A673 (cell line): ENCODE measurements at regions of chr3 and their contacts with region 1.

Region 1: GRCh38 chr3:115783938-115784738 is 160.8 kb downstream of the GAP43 start:
- DNase-seq: peak; percentile 96
- H3K4me3 ChIP-seq: peak overlapping the region; percentile 74
- H3K27ac ChIP-seq: peak overlapping the region; percentile 73
- H3K4me1 ChIP-seq: peaks cover 3% of the 10 kb centered on the region
- H3K27me3 ChIP-seq: no peaks in the 10 kb centered on the region
- CTCF ChIP-seq: peak; percentile 99

Region 2: DNA sequence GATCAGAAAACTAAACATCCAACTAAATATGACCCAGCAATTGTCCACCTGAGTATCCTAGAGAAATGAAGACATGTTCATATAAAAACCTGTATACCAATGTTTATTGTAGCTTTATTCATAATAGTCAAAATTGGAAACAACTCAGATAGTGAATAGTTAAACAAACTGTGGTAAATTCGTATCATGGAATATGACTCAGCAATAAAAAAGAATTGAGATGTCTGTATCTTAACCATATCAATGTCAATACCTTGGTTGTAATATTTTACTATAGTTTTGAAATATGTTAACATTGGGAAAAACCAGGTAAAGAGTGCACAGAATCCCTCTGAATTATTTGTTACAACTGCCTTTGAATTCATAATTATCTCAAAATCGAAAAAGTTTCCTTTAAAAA is 320.1 kb before region 1 on chr3:
- CTCF ChIA-PET with region 1: no interaction called
- POLR2A ChIA-PET with region 1: no interaction called
- intact Hi-C with region 1: no loop called
- DNase-seq: no peak
- H3K4me3 ChIP-seq: no peak overlapping the region
- H3K27ac ChIP-seq: no peak overlapping the region
- H3K4me1 ChIP-seq: no peaks in the 10 kb centered on the region
- H3K27me3 ChIP-seq: no peaks in the 10 kb centered on the region
- CTCF ChIP-seq: no peak

Region 3: DNA sequence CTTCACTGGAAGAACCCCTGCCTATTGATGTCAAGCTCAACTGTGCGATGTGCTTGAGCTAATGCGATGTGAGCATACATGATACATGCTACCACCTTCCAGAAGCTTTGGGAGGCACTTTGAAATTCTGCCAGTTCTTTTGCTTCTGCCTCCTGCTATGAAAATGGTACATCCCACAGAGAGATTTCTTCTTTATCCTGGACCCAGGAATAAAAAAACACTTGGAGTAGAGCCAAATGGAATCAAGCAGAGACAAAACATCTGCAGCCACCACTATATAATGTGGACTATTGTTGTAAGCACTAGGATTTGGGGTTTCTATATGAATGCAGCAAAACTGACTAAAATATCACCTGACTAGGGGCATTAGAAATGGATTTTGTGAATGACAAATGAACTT is 280.7 kb before region 1 on chr3:
- CTCF ChIA-PET with region 1: no interaction called
- POLR2A ChIA-PET with region 1: interaction called, 3 read pairs
- intact Hi-C with region 1: loop called (anchors 5 kb)
- DNase-seq: peak; percentile 90
- H3K4me3 ChIP-seq: no peak overlapping the region
- H3K27ac ChIP-seq: no peak overlapping the region
- H3K4me1 ChIP-seq: peaks cover 51% of the 10 kb centered on the region
- H3K27me3 ChIP-seq: no peaks in the 10 kb centered on the region
- CTCF ChIP-seq: no peak

Region 4: DNA sequence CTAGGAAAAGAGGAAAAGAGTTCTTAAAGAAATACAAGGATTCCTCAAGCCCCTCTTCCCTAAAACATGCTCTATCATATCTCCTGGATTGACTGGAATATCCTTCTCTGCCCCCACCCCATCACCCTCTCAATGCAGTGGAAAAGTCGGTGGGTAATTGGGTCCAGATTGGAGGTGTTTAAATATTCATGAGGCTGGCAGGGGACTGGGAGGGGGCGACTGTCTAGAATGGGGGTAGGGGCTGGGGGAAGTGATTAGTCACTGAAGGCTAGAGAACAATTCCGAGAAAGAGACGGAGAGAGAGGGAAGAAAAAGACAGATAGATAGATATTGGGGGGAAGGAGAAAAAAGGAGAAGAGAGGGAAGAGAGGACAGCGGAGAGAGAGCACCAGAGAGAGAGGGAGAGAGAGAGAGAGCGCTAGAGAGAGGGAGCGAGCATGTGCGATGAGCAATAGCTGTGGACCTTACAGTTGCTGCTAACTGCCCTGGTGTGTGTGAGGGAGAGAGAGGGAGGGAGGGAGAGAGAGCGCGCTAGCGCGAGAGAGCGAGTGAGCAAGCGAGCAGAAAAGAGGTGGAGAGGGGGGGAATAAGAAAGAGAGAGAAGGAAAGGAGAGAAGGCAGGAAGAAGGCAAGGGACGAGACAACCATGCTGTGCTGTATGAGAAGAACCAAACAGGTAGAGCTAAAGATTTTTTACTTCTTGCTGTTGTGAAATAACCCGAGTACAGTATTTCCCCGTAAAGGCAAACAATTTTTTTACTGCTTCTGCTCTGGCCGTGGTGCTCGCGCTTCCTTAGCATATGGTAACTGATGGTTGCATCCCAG is 160.9 kb before region 1 on chr3 and contains the start of gene GAP43:
- CTCF ChIA-PET with region 1: no interaction called
- POLR2A ChIA-PET with region 1: no interaction called
- intact Hi-C with region 1: no loop called
- DNase-seq: peak; percentile 87
- H3K4me3 ChIP-seq: peak within 1 kb of the TSS; percentile 44
- H3K27ac ChIP-seq: no peak within 1 kb of the TSS
- H3K4me1 ChIP-seq: peaks cover 39% of the 10 kb centered on the region
- H3K27me3 ChIP-seq: no peaks in the 10 kb centered on the region
- CTCF ChIP-seq: 0 out of 2 replicates have a peak, but pooled peaks have one; percentile 14
- total RNA-seq, gene GAP43: 31.6 and 42.0 TPM in 2 replicates

Region 5: GRCh38 chr3:115713284-115713683 is 70.9 kb before region 1 on chr3:
- CTCF ChIA-PET with region 1: interaction called, 3 read pairs
- POLR2A ChIA-PET with region 1: no interaction called
- intact Hi-C with region 1: loop called (anchors 1 kb)
- DNase-seq: peak; percentile 89
- H3K4me3 ChIP-seq: no peak overlapping the region
- H3K27ac ChIP-seq: no peak overlapping the region
- H3K4me1 ChIP-seq: peaks cover 44% of the 10 kb centered on the region
- H3K27me3 ChIP-seq: no peaks in the 10 kb centered on the region
- CTCF ChIP-seq: no peak

Region 6: DNA sequence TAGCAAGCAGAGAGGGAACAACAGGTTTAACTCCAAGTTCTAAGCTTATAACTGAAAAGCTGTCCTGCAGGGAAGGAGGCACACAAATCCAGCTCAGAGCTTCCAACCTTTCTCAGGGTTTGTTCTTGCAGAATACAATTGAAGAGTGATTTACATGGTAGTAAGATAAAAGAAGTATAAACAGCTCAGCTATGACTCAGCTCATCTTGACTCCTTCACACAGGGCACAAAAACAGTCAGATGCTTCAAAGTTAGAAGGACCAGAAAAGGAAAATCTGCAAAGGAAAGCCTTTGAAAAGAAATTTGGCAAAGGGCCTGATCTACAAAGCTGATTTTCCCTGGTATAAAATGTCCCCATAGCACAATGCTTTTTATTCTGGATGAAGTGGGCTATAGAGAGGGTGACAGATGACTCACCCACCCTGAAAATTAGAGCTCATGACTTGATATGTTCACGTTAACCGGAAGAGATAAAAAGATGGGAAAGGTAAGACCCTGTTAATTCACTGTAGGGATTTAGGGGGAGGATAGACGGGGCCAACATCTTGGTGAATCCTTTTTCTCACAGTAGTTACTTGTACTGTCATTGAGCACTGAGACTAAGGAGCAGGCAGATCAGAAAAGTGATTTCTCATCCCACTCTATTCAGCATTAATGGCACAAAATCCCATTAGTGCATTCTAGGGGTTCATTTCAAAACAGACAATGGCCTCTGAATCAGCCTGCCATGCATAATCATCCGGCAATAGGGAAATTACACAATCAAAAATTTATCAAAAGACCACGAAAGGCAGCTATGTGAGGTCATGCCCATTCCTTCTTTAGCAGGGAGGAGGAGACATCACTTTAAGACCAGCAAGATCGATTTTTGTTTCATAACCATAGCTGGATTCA is 17.3 kb before region 1 on chr3:
- CTCF ChIA-PET with region 1: interaction called, 9 read pairs
- POLR2A ChIA-PET with region 1: no interaction called
- intact Hi-C with region 1: loop called (anchors 1 kb)
- DNase-seq: peak; percentile 85
- H3K4me3 ChIP-seq: no peak overlapping the region
- H3K27ac ChIP-seq: peak overlapping the region; percentile 37
- H3K4me1 ChIP-seq: peaks cover 18% of the 10 kb centered on the region
- H3K27me3 ChIP-seq: no peaks in the 10 kb centered on the region
- CTCF ChIP-seq: no peak